ENCODE measurements at regions of chr2 and their contacts with region 1.

Region 1: DNA sequence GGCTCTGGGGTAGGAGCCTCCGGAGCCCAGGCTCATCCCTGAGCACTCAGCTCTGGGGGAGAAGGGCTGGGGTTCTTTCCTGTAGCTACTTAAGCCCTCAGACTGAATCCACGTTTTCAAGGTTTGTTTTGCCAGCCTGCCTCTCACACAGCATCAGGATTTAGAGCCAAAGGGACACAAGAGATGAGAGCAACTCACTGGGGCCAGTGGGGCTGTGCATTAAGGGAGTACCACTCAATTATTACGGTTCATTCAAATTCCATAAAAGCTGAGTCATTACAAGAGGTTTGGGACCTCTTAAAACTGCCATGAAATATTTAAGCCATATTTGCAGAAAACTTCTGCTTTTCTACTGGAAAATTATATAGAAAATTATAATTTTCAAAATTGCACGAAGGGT is 17.1 kb upstream of the SNED1 start:
- DNase-seq: no peak
- ATAC-seq: no peak
- H3K4me3 ChIP-seq: no peak overlapping the region
- H3K27ac ChIP-seq: no peak overlapping the region
- H3K4me1 ChIP-seq: peaks cover 11% of the 10 kb centered on the region
- H3K27me3 ChIP-seq: no peaks in the 10 kb centered on the region
- CTCF ChIP-seq: no peak
- POLR2A ChIP-seq: no peak

Region 2: GRCh38 chr2:241001413-241002274 is 20.4 kb after region 1 on chr2:
- intact Hi-C with region 1: loop called (anchors 2 kb)
- DNase-seq: no peak
- ATAC-seq: no peak
- H3K4me3 ChIP-seq: no peak overlapping the region
- H3K27ac ChIP-seq: no peak overlapping the region
- H3K4me1 ChIP-seq: peaks cover 35% of the 10 kb centered on the region
- H3K27me3 ChIP-seq: no peaks in the 10 kb centered on the region
- CTCF ChIP-seq: no peak
- POLR2A ChIP-seq: no peak

Region 3: GRCh38 chr2:241041589-241042158 is 60.4 kb after region 1 on chr2:
- intact Hi-C with region 1: no loop called
- DNase-seq: no peak
- ATAC-seq: no peak
- H3K4me3 ChIP-seq: no peak overlapping the region
- H3K27ac ChIP-seq: no peak overlapping the region
- H3K4me1 ChIP-seq: peaks cover 4% of the 10 kb centered on the region
- H3K27me3 ChIP-seq: no peaks in the 10 kb centered on the region
- CTCF ChIP-seq: no peak
- POLR2A ChIP-seq: no peak

Region 4: GRCh38 chr2:241271641-241272297 is 290.5 kb after region 1 on chr2:
- intact Hi-C with region 1: no loop called
- DNase-seq: peak; percentile 88 to 93 (median 92)
- ATAC-seq: peak; percentile 83
- H3K4me3 ChIP-seq: peak overlapping the region; percentile 63 to 88
- H3K27ac ChIP-seq: peak overlapping the region; percentile 93 to 99 (median 97)
- H3K4me1 ChIP-seq: peaks cover 59% of the 10 kb centered on the region
- H3K27me3 ChIP-seq: no peaks in the 10 kb centered on the region
- CTCF ChIP-seq: peak in 1 of 7 experiments; percentile 18
- POLR2A ChIP-seq: peak; percentile 48 to 84 (median 77)

Measured in body of pancreas (tissue), 4 donors.